Common myeloid progenitor, CD34-positive (primary cell): ENCODE measurements at regions of chr16 and their contacts with region 1.

Region 1: DNA sequence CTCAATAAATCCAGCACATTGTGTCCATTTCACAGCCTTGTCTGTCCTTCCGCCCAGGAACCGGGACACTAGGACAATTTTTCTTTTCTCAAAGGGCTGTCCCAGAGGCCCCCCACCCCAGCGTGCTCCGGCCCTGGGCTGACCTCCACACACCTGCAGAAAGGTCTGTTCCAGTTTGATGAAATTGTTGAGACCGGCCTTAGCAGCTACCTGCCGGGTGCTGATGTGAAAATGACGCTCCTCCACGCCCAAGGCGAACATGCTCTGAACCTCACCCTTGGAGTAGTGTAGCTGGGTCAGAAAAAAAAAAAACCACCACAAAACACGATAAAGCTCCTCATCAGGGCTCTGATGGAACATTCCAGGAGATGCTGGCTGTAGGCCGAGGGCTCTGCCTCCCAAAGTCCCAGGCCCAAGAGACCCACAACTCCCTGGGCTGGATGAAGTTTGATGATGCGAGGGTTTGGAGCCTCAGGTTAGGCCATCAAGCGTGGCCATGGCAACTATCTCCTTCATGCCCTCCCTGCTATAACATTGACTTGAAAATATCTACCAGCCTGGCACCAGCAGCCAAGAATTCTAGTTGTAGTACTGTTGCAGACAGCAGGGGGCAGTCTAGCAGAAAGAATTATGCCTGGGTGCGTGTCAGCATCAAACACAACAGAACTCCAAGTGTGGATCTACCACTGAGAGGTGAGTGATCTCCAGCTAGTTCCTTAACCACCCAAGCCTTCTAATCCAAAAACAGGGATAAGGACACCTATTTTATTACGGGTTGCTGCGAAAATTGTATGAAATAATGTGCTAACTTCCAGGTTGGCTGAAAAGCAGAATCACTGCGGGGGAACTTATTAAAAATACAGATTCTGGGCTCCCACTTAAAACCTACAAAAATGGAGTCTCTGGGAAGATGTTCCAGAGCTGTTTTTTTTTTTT is 62.1 kb downstream of the RMI2 start:
- DNase-seq: peak; percentile 72 to 85 (median 82)
- H3K4me3 ChIP-seq: no peak overlapping the region
- H3K27ac ChIP-seq: no peak overlapping the region
- H3K4me1 ChIP-seq: peaks cover 0 to 42% (median 33%) of the 10 kb centered on the region in 4 experiments
- H3K27me3 ChIP-seq: no peaks in the 10 kb centered on the region

Region 2: GRCh38 chr16:10964039-10964890 is 443.1 kb before region 1 on chr16:
- CTCF ChIA-PET with region 1: interaction called, 13 read pairs
- POLR2A ChIA-PET with region 1: no interaction called
- DNase-seq: peak; percentile 79 to 91 (median 89)
- H3K4me3 ChIP-seq: peak overlapping the region in 1 of 7 experiments; percentile 22
- H3K27ac ChIP-seq: no peak overlapping the region
- H3K4me1 ChIP-seq: peaks cover 2 to 35% (median 16%) of the 10 kb centered on the region in 4 experiments
- H3K27me3 ChIP-seq: no peaks in the 10 kb centered on the region

Region 3: GRCh38 chr16:11333711-11334110 is 73.6 kb before region 1 on chr16:
- CTCF ChIA-PET with region 1: no interaction called
- POLR2A ChIA-PET with region 1: no interaction called
- DNase-seq: no peak
- H3K4me3 ChIP-seq: no peak overlapping the region
- H3K27ac ChIP-seq: no peak overlapping the region
- H3K4me1 ChIP-seq: peaks cover 0 to 8% (median 5%) of the 10 kb centered on the region in 4 experiments
- H3K27me3 ChIP-seq: peaks cover 0 to 2% (median 0%) of the 10 kb centered on the region in 5 experiments

Region 4: DNA sequence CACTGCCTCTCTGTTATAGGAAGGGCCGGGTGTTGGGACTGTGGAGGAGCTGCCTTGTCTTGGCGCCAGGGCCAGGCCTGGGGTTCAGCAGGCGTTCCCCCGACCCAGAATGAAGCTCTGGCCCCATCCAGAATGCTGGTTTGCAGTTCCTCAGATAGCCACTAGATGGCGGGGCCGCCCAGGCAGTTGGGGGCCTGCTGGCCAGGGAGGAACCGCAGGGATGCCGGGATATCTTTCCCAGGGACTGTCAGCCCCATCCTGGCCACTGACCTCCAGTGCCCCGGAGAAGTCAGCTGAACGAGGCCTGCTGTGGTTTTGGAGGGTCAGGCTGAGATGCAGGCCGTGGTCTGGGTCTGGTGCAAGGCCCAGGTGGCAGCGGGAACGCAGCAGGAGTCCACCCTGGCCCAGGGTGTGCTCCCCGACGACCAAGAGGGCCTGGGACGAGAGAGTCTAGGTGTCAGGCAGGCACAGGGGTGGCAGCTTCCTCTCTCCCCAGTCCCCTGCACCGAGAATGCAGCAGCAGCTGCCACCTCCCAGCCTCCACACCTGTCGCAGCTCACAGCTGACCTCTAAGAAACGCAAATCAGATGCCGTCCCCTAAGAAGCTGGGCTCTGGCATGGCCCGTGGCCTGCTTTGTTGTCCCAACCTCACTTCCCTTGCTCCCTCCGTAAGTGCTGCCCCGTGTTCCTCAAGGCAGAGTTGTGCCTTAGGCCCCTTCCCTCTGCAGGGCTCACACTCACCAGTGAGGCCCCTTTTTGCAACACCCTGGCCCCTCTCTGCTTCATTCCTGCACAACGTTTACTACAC is 10.9 kb before region 1 on chr16:
- CTCF ChIA-PET with region 1: interaction called, 40 read pairs
- POLR2A ChIA-PET with region 1: no interaction called
- DNase-seq: peak; percentile 41 to 53 (median 52)
- H3K4me3 ChIP-seq: no peak overlapping the region
- H3K27ac ChIP-seq: no peak overlapping the region
- H3K4me1 ChIP-seq: no peaks in the 10 kb centered on the region
- H3K27me3 ChIP-seq: no peaks in the 10 kb centered on the region

Region 5: DNA sequence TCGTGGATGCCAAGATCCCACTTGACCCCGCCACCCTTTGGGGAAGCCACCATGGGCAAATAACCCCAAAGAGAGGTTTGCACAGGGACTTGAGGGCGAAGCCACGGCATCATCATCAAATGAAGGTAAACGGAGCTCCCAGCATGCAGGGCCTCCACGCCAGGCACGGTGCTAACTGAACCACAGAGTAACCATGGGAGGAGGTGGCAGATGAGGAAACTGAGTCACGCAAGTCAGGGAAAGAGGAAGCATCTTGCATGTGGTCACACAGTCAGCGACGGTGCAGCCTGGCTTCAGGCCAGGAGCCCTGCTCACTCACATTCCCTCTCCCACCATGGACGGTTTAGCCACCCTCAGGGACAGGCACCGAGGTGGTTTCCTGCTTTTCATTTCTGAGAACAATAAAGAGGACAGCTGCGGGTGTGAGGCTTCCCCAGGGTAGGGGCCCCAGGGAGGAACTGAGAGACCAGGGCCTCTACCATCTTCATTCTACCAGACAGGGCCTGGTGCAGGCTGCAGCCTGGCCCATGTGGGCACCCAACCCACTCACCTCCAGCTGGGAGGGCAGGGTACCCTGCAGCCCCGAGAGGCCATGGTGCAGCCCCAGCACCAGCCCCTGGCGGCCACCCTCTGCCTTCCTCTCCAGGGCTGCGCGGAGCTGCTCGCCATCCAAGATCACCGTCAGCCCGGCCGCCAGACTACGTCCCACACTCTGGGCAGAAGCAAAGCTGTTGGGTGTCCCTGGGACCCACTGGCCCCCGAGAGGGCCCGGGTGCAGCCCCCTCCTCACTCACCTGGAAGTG is 16.2 kb after region 1 on chr16:
- CTCF ChIA-PET with region 1: interaction called, 17 read pairs
- POLR2A ChIA-PET with region 1: no interaction called
- DNase-seq: peak; percentile 29 to 82 (median 78)
- H3K4me3 ChIP-seq: peak overlapping the region in 2 of 7 experiments; percentile 8 to 23
- H3K27ac ChIP-seq: peak overlapping the region in 1 of 2 experiments; percentile 30
- H3K4me1 ChIP-seq: peaks cover 0 to 56% (median 34%) of the 10 kb centered on the region in 4 experiments
- H3K27me3 ChIP-seq: no peaks in the 10 kb centered on the region

Region 6: DNA sequence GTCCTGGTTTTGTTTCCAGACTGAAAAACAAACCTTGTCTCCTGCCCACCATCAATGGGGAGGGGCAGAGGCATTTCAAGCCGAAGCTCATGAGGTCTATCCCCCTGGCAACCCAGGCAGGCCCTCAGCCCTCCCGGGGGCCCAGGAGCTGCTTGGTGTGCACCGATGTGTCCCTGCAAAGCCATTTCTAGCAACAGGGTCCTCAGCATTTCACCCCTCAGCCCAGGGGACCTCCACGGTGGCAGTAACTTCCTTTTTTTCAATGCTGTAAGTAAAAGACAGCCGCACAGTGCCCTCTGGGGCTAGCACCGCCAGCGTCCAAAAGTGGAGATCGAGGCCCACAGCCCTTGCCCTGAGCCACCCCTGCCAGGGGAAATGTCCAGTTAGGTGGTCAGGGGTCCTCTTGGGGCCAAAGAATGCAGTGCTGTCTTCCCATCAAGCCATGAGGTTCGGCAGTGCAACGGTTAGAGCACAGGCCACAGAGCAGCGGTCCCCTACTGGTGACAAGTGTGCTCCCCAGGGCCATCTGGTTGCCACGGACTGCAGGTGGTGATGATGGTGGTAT is 99.5 kb after region 1 on chr16:
- CTCF ChIA-PET with region 1: interaction called, 21 read pairs
- POLR2A ChIA-PET with region 1: interaction called, 4 read pairs
- DNase-seq: peak; percentile 37 to 74 (median 71)
- H3K4me3 ChIP-seq: peak overlapping the region in 2 of 7 experiments; percentile 19 to 54
- H3K27ac ChIP-seq: peak overlapping the region in 1 of 2 experiments; percentile 4
- H3K4me1 ChIP-seq: peaks cover 0 to 57% (median 38%) of the 10 kb centered on the region in 4 experiments
- H3K27me3 ChIP-seq: no peaks in the 10 kb centered on the region

Region 7: DNA sequence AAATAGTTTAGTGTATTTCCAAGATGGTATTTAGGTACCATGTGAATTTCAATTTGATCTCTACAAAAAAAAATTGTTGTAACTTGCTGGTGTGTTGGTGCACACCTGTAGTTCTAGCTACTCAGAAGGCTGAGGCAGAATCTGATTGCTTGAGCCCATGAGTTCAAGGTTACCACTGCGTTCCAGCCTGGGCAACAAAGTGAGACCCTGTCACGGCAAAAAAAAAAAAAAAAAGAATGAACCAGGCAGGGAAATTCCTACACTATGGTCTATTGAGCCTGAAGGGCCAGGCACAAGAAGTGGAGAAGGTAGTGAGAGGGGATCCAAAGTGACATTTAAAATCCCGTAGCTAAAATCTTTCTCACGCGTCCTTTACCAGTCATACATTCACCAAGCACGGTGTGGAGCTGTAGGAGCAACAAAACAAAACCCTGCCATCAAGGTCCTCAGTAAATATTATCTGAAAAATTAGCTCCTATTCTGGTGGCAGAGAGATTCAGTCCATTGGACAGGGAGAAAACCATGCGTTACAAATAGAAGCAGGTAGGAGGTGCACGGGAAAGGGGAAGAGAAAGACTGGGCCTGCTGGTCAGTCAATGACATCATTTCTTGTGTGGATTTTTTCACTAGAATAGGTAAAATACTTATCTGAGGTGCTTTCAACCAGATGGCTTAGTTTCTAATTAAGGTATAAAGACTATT is 308.1 kb after region 1 on chr16:
- CTCF ChIA-PET with region 1: interaction called, 18 read pairs
- POLR2A ChIA-PET with region 1: interaction called, 3 read pairs
- DNase-seq: no peak
- H3K4me3 ChIP-seq: no peak overlapping the region
- H3K27ac ChIP-seq: no peak overlapping the region
- H3K4me1 ChIP-seq: peaks cover 0 to 5% (median 0%) of the 10 kb centered on the region in 4 experiments
- H3K27me3 ChIP-seq: no peaks in the 10 kb centered on the region